Heart left ventricle (tissue), 16 donors: ENCODE measurements at regions of chr10 and their contacts with region 1.

Region 1: GRCh38 chr10:44959247-44960087 is at the start of gene RASSF4:
- DNase-seq: peak; percentile 96 to 98 (median 97)
- ATAC-seq: peak; percentile 76 to 94 (median 90)
- H3K4me3 ChIP-seq: peak within 1 kb of the TSS; percentile 45 to 90 (median 76)
- H3K27ac ChIP-seq: peak within 1 kb of the TSS; percentile 83 to 98 (median 94)
- H3K4me1 ChIP-seq: peaks cover 10 to 89% (median 64%) of the 10 kb centered on the region in 12 donors
- H3K27me3 ChIP-seq: no peaks in the 10 kb centered on the region
- CTCF ChIP-seq: peak in 1 of 12 donors; percentile 7
- POLR2A ChIP-seq: peak; percentile 38 to 94
- total RNA-seq, gene RASSF4: 64.4 to 125 (median 89.5) TPM

Region 2: GRCh38 chr10:44878706-44879530 is 80.5 kb before region 1 on chr10:
- intact Hi-C with region 1: loop called in 1 of 10 experiments (anchors 10 kb)
- DNase-seq: peak; percentile 88 to 94 (median 91)
- ATAC-seq: peak; percentile 89 to 95 (median 92)
- H3K4me3 ChIP-seq: peak overlapping the region in 11 of 12 donors; percentile 11 to 60 (median 54)
- H3K27ac ChIP-seq: peak overlapping the region in 11 of 12 donors; percentile 18 to 76 (median 55)
- H3K4me1 ChIP-seq: peaks cover 0 to 25% (median 13%) of the 10 kb centered on the region in 12 donors
- H3K27me3 ChIP-seq: no peaks in the 10 kb centered on the region
- CTCF ChIP-seq: peak in 5 of 12 donors; percentile 15 to 36 (median 24)
- POLR2A ChIP-seq: no peak

Region 3: DNA sequence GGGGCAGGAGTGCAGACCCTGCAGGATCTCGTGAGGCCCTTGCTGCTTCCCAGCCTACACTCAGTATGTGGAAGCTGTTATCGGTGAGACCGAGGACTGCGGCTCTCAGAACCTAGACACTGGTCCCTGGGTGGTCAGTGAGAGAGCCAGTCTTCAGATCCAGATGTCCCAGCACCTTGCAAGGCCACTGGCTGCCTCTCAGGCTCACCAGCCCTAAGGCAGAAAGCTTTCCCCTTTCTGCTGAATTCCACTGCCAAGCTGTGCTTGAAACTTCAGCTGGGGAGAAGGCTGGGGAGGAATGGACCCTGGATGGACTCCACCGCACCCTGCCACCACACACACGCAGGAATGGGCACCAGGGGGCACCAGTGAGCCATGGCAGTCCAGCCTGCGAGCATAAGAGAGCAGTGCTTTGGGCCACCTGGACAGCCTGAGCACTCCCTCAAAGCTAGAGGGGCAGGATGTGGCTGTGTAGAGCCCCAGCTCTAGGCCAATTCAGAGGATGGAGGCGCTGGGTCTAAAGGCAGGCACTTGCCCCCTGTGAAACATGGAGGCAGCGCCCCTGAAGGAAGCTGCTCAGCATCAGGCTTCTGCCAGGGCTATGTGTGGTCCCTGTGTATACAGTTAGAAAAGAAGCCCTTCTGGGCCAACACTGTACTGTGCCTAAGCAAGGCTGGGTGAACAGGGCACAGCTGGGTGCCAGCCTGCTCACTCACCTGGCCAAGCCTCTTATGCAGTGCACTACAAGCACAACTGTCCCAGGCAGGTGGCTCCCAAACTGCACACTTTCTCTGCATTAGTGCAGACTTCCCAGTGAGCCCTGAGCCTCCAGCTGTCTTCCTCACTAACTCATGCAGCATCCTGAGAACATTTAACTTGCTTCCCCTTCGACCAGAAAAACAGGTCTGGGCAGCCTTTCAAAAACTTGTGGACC is 26.7 kb before region 1 on chr10:
- intact Hi-C with region 1: loop called in 1 of 10 experiments (anchors 2 kb)
- DNase-seq: peak; percentile 89 to 96 (median 92)
- ATAC-seq: peak; percentile 72 to 92 (median 90)
- H3K4me3 ChIP-seq: no peak overlapping the region
- H3K27ac ChIP-seq: peak overlapping the region in 2 of 12 donors; percentile 21 to 31
- H3K4me1 ChIP-seq: peaks cover 0 to 54% (median 39%) of the 10 kb centered on the region in 12 donors
- H3K27me3 ChIP-seq: no peaks in the 10 kb centered on the region
- CTCF ChIP-seq: peak; percentile 92 to 99 (median 98)
- POLR2A ChIP-seq: no peak

Region 4: GRCh38 chr10:44974628-44975431 is 15.4 kb after region 1 on chr10:
- intact Hi-C with region 1: loop called in 2 of 10 experiments (anchors 1 to 2 kb)
- DNase-seq: peak; percentile 76 to 86 (median 82)
- ATAC-seq: peak; percentile 34 to 79 (median 67)
- H3K4me3 ChIP-seq: peak overlapping the region in 11 of 12 donors; percentile 5 to 92 (median 69)
- H3K27ac ChIP-seq: peak overlapping the region; percentile 54 to 97 (median 90)
- H3K4me1 ChIP-seq: peaks cover 9 to 92% (median 59%) of the 10 kb centered on the region in 12 donors
- H3K27me3 ChIP-seq: no peaks in the 10 kb centered on the region
- CTCF ChIP-seq: peak; percentile 92 to 100 (median 98)
- POLR2A ChIP-seq: peak in 1 of 2 donors; percentile 61

Region 5: DNA sequence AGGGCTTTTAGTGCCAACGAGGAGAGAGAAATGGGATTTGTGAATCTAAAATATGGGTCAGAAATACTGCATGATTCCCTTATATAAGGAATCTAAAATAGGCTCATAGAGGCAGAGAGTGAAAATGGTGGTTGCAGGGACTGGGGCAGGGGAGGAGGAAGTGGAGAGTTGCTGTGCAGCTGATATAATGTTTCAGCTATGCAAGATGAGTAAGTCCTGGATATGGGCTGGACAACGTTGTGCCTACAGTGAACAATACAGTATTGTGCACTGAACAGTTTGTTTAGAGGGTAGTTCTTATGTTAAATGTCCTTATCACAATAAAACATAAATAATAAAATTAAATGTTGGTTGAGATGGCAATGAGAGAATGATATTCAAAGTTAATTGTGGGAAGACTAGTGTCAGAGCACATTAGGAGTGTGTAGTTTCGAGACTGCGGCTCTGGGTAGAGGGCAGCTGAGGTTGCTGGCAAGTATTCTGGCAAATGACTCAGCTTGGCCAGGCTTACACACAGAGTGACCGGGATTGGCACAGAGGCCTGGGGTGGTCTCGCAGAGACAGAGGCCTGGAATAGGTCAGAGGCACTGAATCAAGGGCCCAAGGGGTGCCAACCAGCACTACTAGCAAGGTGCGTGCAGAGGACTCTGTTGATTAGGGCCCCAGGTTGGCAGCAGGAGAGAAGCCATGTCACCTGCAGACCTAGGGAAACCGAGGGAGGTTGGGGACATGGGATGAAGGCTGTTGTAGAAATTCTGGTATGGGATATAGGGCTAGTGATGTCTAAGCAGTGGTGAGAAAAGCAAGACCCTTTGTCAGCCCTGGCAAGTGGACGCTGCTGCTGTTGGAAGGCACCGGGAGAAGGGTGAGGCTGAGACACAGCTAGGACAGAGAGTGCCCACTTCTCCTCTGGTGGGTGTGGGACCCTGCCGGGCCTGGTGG is 22.0 kb after region 1 on chr10:
- intact Hi-C with region 1: loop called in 2 of 10 experiments (anchors 1 to 2 kb)
- DNase-seq: peak in 4 of 5 donors; percentile 60 to 79 (median 71)
- ATAC-seq: peak; percentile 14 to 61 (median 45)
- H3K4me3 ChIP-seq: no peak overlapping the region
- H3K27ac ChIP-seq: peak overlapping the region; percentile 63 to 97 (median 87)
- H3K4me1 ChIP-seq: peaks cover 14 to 100% (median 89%) of the 10 kb centered on the region in 12 donors
- H3K27me3 ChIP-seq: no peaks in the 10 kb centered on the region
- CTCF ChIP-seq: no peak
- POLR2A ChIP-seq: no peak

Region 6: DNA sequence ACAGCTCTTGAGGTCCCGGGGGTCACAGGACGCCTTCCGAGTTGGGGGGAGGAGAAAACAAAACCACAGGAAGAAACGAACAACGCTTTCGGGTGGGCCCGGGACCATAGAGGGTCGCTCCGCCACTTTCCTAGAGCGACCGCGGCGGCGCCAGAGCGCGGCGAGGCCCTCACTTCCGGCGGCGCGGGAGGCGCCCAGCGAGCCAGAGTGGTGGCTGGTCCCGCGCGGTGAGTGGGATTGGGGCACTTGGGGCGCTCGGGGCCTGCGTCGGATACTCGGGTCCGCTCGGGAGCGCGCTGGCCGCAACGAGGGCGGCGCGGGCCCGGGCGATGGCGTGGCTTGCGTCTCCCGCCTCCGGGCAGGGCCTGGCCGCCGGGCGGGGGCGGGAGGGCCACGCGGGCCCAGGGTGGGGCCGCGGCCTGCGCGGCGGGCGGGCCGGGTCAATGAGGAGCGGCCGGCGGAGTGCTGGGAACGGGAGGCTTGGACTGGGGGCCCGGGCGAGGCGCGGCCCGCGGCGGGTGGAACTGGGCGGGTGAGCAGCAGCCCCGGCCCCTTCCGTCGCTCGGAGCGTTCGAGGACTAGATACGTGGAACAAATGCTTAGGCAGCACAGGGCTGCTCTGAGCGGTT is 41.4 kb after region 1 on chr10 and contains the start of gene ZNF22:
- intact Hi-C with region 1: loop called in 2 of 10 experiments (anchors 1 to 5 kb)
- DNase-seq: peak; percentile 70 to 85 (median 82)
- ATAC-seq: peak; percentile 14 to 80 (median 63)
- H3K4me3 ChIP-seq: peak within 1 kb of the TSS; percentile 45 to 79 (median 66)
- H3K27ac ChIP-seq: peak within 1 kb of the TSS; percentile 93 to 99 (median 96)
- H3K4me1 ChIP-seq: peaks cover 8 to 73% (median 56%) of the 10 kb centered on the region in 12 donors
- H3K27me3 ChIP-seq: no peaks in the 10 kb centered on the region
- CTCF ChIP-seq: peak in 5 of 12 donors; percentile 10 to 40 (median 19)
- POLR2A ChIP-seq: peak in 1 of 2 donors; percentile 34
- total RNA-seq, gene ZNF22: 12.7 to 16.8 (median 14.6) TPM